ENCODE measurements at regions of chr10 and their contacts with region 1.

Region 1: DNA sequence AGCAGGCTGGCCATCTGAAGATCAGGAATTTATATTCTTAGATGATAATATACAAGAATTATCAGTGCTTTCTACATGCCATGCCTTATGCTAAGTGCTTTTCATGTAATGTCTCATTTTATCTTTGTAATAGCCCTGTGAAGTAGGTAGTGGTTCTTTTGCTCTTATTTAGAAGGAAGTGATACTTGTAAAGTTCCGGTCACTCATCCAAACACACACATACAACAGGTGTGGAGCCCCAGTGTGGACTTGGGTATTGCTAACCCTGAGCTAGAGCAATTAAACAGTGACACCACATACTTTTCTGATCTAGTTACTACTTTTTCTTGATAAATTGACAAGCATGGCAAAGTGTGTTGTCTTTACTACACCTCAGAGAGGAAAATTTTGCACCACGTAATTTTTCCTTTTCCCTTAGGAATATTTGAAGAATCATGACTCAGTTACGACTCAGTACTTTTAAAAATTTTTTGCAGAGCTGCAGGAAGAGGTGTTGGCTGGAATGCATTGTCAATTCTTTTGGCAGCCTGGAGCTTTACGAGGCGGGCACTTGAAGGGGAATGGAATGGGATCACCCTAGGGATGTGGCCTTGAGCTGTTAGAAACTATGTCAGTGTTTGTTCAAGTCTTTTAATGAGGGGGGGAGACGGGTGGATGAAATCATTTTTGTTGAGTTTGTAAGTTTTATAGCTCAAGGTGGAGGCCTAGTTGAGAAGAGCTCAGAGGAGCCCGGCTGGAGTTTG is 212.5 kb upstream of the CELF2 start:
- DNase-seq: no peak
- H3K4me3 ChIP-seq: no peak overlapping the region
- CTCF ChIP-seq: no peak

Region 2: GRCh38 chr10:10421071-10421470 is 384.1 kb before region 1 on chr10:
- CTCF ChIA-PET with region 1: no interaction called
- POLR2A ChIA-PET with region 1: no interaction called
- DNase-seq: no peak
- H3K4me3 ChIP-seq: no peak overlapping the region
- CTCF ChIP-seq: no peak

Region 3: DNA sequence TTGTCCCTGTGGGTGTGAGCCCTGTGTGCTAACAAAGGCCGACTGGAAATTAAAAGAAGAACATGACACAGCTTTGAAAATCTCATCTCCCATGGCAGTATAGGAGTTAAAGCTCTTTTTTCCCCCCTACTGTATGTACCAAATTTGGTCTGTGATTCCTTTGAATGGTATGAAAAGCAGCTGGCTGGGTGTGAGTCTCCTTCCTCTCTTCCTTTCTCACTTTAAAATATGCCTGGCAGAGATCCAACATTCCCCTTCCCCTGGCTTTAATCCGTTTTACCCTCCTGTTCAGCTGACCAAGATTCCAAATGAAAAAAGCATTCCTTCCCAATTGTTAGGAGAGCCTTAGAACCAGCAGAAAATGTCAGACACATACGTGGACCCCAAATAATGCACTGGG is 12.5 kb before region 1 on chr10:
- CTCF ChIA-PET with region 1: interaction called, 5 read pairs
- POLR2A ChIA-PET with region 1: interaction called, 10 read pairs
- DNase-seq: peak; percentile 74
- H3K4me3 ChIP-seq: no peak overlapping the region
- CTCF ChIP-seq: no peak

Region 4: DNA sequence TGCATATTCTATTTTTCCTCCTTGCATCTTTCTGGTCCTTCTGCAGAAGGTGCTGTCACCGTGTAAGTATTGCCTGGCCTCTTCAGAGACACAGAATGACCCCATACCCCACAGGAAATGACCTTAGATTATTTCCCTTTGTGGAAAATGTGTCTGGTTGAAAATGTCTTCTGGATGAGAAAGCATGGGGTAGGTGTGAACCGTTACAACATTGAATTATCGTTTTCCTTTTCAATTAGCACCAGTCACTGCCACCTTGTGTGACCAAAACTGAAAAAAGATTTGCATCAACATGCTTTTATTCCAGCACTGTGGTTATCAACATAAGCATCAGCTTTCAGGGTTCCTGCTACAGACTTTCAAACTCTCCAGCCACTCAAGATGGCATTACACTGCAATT is 154.5 kb after region 1 on chr10:
- CTCF ChIA-PET with region 1: no interaction called
- POLR2A ChIA-PET with region 1: no interaction called
- DNase-seq: no peak
- H3K4me3 ChIP-seq: no peak overlapping the region
- CTCF ChIP-seq: no peak